Activated CD4-positive, alpha-beta T cell treated with anti-CD3 and anti-CD28 coated beads, Interleukin-2, amount 10 ng/mL, durations not matched to agents 24 days and 14 days (primary cell): ENCODE measurements at regions of chr10 and their contacts with region 1.

Region 1: DNA sequence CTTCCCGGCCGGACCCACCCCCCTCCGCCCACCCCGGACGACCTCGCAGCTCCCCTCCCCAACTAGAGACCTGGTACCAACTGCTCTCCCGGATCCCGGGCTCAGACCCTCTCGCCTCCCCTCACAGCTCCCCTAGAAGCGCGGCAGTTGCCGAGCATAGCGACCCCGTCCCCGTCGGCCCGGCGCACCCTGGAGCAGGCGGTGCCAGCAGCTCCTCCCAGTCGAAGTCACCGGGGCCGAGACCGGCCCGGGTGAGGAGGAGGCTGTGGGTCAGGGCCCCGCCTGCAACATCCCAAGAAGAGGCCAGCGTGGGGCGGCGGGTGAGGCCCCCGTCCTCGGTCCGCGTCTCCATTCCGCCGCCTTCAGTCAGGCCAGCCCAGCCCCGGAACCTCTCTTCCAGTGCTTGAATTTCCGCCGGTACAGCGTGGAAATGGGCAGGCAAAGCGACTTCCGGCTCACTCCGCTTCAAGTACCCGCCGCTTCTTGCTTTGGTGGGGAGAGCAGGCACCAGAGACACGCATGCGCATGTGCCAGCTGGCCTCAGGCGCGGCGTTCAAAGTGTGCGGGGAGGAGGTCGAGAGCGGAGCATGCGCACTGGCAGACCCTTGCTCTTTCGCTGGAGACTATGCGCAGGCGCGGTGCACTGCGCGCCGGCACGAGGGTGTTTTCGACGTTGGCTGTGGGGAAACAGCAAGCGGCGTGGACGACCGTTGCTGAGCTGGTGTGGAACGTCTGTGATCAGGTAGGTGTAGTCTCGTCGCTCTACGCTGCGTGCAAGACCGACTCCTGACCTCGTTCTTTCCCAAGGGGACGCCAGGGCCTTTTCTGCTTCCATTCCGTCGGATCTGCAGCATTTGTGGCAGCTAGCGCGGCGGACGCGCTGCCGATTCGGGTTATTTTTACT is at the start of gene C10orf88:
- DNase-seq: peak; percentile 99
- H3K4me3 Mint-ChIP-seq: peak within 1 kb of the TSS; percentile 91
- H3K27ac Mint-ChIP-seq: peak within 1 kb of the TSS; percentile 92
- H3K4me1 Mint-ChIP-seq: peaks cover 22% of the 10 kb centered on the region
- H3K27me3 Mint-ChIP-seq: peaks cover 15% of the 10 kb centered on the region
- total RNA-seq, gene C10orf88: 13.9 and 15.7 TPM in 2 replicates

Region 2: GRCh38 chr10:122530177-122530576 is 423.9 kb before region 1 on chr10:
- intact Hi-C with region 1: no loop called
- DNase-seq: no peak
- H3K4me3 Mint-ChIP-seq: no peak overlapping the region
- H3K27ac Mint-ChIP-seq: no peak overlapping the region
- H3K4me1 Mint-ChIP-seq: no peaks in the 10 kb centered on the region
- H3K27me3 Mint-ChIP-seq: peaks cover 9% of the 10 kb centered on the region

Region 3: GRCh38 chr10:122879339-122880273 is 74.5 kb before region 1 on chr10 and contains the start of gene FAM24B:
- intact Hi-C with region 1: loop called (anchors 1 kb)
- DNase-seq: peak; percentile 98
- H3K4me3 Mint-ChIP-seq: peak within 1 kb of the TSS; percentile 98
- H3K27ac Mint-ChIP-seq: peak within 1 kb of the TSS; percentile 96
- H3K4me1 Mint-ChIP-seq: peaks cover 38% of the 10 kb centered on the region
- H3K27me3 Mint-ChIP-seq: no peaks in the 10 kb centered on the region
- total RNA-seq, gene FAM24B: 14.2 and 15.2 TPM in 2 replicates

Region 4: GRCh38 chr10:122980209-122981065 is 26.4 kb after region 1 on chr10 and contains the start of gene PSTK:
- intact Hi-C with region 1: loop called (anchors 1 kb)
- DNase-seq: peak; percentile 96
- H3K4me3 Mint-ChIP-seq: peak within 1 kb of the TSS; percentile 91
- H3K27ac Mint-ChIP-seq: peak within 1 kb of the TSS; percentile 98
- H3K4me1 Mint-ChIP-seq: peaks cover 16% of the 10 kb centered on the region
- H3K27me3 Mint-ChIP-seq: peaks cover 10% of the 10 kb centered on the region
- total RNA-seq, gene PSTK: 4.5 and 4.8 TPM in 2 replicates

Region 5: GRCh38 chr10:123045961-123046731 is 92.1 kb after region 1 on chr10:
- intact Hi-C with region 1: no loop called
- DNase-seq: no peak
- H3K4me3 Mint-ChIP-seq: no peak overlapping the region
- H3K27ac Mint-ChIP-seq: no peak overlapping the region
- H3K4me1 Mint-ChIP-seq: peaks cover 4% of the 10 kb centered on the region
- H3K27me3 Mint-ChIP-seq: no peaks in the 10 kb centered on the region